Heart left ventricle (tissue), 16 donors: ENCODE measurements at regions of chr9 and their contacts with region 1.

Region 1: DNA sequence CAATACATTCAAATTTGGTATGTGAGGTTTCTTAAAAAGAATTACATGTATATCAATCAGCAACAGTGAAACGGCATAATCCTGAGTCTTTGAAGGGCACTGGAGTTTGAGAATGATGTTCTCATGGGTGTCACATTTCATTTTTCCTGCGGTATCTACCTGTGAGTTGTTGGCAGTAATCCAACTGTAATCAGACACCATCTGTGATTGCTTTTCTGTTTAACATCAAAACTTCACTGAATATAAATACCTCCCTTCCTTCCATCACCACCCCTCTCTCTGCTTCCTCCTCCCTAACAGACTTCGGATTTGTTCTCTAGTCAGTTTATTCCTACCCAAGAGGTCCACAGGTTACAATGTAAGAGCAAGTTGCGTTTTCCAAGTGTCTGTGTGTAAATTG is 275.2 kb upstream of the PCSK5 start:
- DNase-seq: no peak
- ATAC-seq: no peak
- H3K4me3 ChIP-seq: no peak overlapping the region
- H3K27ac ChIP-seq: no peak overlapping the region
- H3K4me1 ChIP-seq: peaks cover 0 to 8% (median 0%) of the 10 kb centered on the region in 12 donors
- H3K27me3 ChIP-seq: no peaks in the 10 kb centered on the region
- CTCF ChIP-seq: no peak
- POLR2A ChIP-seq: no peak

Region 2: DNA sequence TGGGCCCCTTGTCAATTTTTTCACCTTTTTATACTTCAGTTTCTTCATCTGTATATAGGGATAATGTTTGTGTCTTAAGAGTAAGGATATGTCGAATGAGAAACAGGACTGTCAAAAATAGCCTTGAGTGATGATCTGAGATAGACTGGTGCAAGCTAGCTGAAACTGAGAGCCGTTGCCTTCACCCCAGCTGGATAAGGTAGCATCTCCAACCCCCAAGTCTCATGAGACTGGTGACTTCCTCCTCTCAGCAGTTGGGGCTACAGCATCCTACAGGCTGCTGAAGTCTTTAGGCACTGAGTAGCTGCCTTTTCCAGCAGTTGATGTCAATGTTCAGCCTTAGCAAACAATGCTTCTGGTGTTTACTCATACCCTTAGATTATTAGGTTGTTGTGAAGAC is 196.8 kb before region 1 on chr9:
- intact Hi-C with region 1: no loop called
- DNase-seq: peak in 1 of 5 donors; percentile 21
- ATAC-seq: no peak
- H3K4me3 ChIP-seq: no peak overlapping the region
- H3K27ac ChIP-seq: no peak overlapping the region
- H3K4me1 ChIP-seq: peaks cover 0 to 5% (median 0%) of the 10 kb centered on the region in 12 donors
- H3K27me3 ChIP-seq: no peaks in the 10 kb centered on the region
- CTCF ChIP-seq: no peak
- POLR2A ChIP-seq: no peak

Region 3: DNA sequence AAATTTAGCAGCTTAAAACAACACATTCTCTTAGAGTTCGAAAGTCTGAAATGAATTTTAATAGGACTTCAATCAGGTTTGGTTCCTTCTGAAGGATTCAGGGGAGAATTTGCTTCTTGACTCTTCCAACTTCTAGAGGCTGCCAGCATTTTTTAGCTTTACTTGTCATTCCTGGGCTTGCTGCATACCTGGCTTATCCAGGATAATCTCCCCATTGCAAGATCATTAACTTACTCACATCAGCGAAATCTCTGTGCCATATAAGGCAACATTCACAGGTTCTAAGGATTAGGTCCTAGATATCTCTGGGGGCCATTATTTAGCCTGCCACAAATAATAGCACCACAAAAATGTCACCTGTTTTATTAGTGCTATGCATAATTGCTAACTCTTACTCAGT is 229.0 kb after region 1 on chr9:
- intact Hi-C with region 1: loop called in 1 of 10 experiments (anchors 10 kb)
- DNase-seq: no peak
- ATAC-seq: no peak
- H3K4me3 ChIP-seq: no peak overlapping the region
- H3K27ac ChIP-seq: no peak overlapping the region
- H3K4me1 ChIP-seq: peaks cover 0 to 4% (median 0%) of the 10 kb centered on the region in 12 donors
- H3K27me3 ChIP-seq: no peaks in the 10 kb centered on the region
- CTCF ChIP-seq: no peak
- POLR2A ChIP-seq: no peak